Sciatic nerve (tissue), 2 donors: ENCODE measurements at regions of chr4 and their contacts with region 1.

Region 1: GRCh38 chr4:159175085-159175988 is 72.5 kb downstream of the RAPGEF2 start:
- DNase-seq: peak; percentile 73
- ATAC-seq: peak; percentile 92

Region 2: GRCh38 chr4:159102622-159103383 is 72.5 kb before region 1 on chr4 and contains the start of gene RAPGEF2:
- intact Hi-C with region 1: loop called (anchors 10 kb)
- DNase-seq: peak; percentile 95
- ATAC-seq: peak; percentile 97
- total RNA-seq, gene RAPGEF2: 74.0 TPM